PC-3 (cell line): ENCODE measurements at regions of chr10 and their contacts with region 1.

Region 1: GRCh38 chr10:51109801-51110533 is 35.7 kb downstream of the PRKG1 start:
- DNase-seq: peak; percentile 99
- ATAC-seq: peak; percentile 90
- H3K4me3 ChIP-seq: peak overlapping the region; percentile 49
- H3K27ac ChIP-seq: peak overlapping the region; percentile 82
- H3K4me1 ChIP-seq: peaks cover 39% of the 10 kb centered on the region
- H3K27me3 ChIP-seq: no peaks in the 10 kb centered on the region
- CTCF ChIP-seq: no peak

Region 2: GRCh38 chr10:50832171-50832751 is 277.7 kb before region 1 on chr10:
- CTCF ChIA-PET with region 1: no interaction called
- POLR2A ChIA-PET with region 1: no interaction called
- intact Hi-C with region 1: no loop called
- DNase-seq: no peak
- ATAC-seq: no peak
- H3K4me3 ChIP-seq: no peak overlapping the region
- H3K27ac ChIP-seq: no peak overlapping the region
- H3K4me1 ChIP-seq: no peaks in the 10 kb centered on the region
- H3K27me3 ChIP-seq: peaks cover 81% of the 10 kb centered on the region
- CTCF ChIP-seq: no peak

Region 3: DNA sequence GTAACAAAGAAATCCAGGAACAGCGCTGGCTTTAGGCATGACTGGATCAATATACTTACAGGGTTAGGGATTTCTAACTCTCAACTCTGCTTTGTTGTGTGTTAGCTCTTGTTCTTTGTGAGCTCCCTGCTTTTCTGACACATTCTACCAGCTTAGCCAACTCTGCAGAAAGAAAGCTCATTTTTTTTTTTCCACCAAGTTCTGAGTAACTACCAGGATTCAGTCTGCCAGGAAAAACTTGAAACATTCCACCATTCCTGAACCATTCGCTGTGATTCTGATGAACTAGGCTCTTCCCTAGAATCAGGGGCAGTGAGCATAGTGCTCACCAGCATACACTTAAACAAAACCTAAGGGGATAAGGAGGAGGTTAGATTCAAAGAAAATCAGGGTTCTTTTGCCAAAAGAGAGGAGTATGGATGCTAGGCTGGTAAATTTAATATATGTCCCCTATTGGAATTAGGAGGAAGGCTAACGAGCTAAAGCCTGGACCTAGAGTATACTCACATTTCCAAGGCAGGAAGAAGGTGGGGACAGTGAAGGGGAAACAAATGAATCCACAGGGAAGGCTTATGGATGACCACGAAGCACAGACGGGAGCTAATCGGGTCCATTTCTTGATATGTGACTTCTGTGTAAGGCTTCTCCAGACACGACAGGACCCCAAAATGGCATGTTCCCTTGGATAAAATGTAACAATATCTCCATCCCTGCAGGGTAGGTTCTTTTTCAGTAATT is 147.7 kb after region 1 on chr10:
- CTCF ChIA-PET with region 1: interaction called, 11 read pairs
- POLR2A ChIA-PET with region 1: no interaction called
- intact Hi-C with region 1: no loop called
- DNase-seq: no peak
- ATAC-seq: no peak
- H3K4me3 ChIP-seq: no peak overlapping the region
- H3K27ac ChIP-seq: no peak overlapping the region
- H3K4me1 ChIP-seq: no peaks in the 10 kb centered on the region
- H3K27me3 ChIP-seq: peaks cover 10% of the 10 kb centered on the region; the same call in 1 of the 2 replicates
- CTCF ChIP-seq: no peak